Activated T-helper 1 cell treated with anti-CD3 and anti-CD28 coated beads, Interleukin-12 subunit alpha, Interleukin-12 subunit beta, Interleukin-2, Interleukin-4 antibody, amounts not matched to agents 30 ng/mL and 10 ng/mL and 1 ng/mL, durations not matched to agents 14 hours and 24 hours and 36 hours (primary cell): ENCODE measurements at regions of chr17 and their contacts with region 1.

Region 1: DNA sequence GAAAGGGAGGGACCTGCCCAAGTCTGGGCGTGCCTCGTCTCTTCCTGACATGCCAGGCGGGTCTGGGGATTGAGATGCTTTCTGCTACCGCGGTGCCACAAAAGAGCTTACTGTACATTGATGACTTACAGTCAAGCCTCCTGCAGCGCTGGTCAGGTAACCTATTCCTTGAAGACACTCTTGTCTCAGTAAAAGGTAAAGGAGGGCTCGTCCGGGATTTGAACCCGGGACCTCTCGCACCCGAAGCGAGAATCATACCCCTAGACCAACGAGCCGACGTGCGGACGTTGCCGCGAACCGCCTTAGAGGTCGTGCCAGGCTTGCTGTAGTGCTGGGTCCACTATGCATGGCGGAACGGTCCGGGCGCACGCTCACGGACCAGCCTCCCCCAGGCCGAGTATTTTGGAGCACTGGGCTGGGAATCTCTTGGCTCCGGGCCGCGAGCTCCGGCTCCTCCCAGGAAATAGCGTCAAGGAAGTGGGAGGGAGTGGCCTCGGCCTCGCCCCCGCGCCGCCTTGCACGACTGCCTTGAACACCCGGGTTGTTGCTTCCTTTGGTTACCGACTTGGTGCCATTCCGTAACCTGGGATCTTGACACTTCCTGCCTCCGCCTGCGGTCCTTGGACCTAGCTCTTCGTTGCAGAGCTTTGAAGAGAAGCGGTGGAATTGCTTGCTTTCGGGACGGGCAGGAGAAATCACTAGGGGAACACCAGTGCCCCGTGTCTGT is 12.4 kb upstream of the AURKB start:
- DNase-seq: peak; percentile 85
- H3K4me3 Mint-ChIP-seq: peak overlapping the region; percentile 97
- H3K27ac Mint-ChIP-seq: peak overlapping the region; percentile 98
- H3K4me1 Mint-ChIP-seq: peaks cover 70% of the 10 kb centered on the region
- H3K27me3 Mint-ChIP-seq: peaks cover 21% of the 10 kb centered on the region

Region 2: DNA sequence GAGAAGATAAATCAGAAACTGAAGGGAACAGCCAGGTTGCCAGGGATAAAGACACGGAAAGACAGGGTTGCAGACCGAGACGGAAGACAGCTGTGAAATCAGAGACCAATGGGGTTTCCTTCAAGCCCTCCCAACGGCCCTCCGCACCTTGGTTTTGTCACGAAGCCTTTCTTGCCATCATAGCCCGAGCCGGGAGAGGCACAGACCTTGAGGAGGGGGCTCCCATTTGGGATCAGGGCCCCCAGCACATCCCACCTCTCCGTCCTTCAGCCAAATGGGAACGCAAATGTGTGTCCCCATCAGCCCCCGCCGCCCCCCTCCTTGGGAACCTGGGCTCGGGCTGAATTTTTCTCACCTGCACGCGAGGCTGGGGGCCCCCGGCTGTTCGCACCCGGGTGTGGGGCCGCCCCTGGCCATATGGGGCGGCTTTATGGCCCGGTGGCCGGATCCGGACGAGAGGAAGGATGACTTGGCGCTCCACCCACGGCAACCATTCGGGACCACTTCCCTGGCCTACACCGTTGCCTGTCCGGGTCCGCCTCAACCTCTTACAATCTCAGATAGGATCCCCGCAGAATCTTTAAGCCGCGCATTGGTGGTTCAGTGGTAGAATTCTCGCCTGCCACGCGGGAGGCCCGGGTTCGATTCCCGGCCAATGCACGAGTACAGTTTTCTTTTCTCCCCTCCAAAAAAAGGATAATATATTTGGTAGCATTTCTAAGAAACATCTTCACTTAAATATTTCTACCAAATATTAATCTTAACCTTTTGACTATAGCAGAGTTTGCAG is 97.4 kb before region 1 on chr17:
- intact Hi-C with region 1: loop called (anchors 1 kb)
- DNase-seq: peak; percentile 79
- H3K4me3 Mint-ChIP-seq: peak overlapping the region; percentile 91
- H3K27ac Mint-ChIP-seq: peak overlapping the region; percentile 97
- H3K4me1 Mint-ChIP-seq: peaks cover 49% of the 10 kb centered on the region
- H3K27me3 Mint-ChIP-seq: peaks cover 52% of the 10 kb centered on the region

Region 3: DNA sequence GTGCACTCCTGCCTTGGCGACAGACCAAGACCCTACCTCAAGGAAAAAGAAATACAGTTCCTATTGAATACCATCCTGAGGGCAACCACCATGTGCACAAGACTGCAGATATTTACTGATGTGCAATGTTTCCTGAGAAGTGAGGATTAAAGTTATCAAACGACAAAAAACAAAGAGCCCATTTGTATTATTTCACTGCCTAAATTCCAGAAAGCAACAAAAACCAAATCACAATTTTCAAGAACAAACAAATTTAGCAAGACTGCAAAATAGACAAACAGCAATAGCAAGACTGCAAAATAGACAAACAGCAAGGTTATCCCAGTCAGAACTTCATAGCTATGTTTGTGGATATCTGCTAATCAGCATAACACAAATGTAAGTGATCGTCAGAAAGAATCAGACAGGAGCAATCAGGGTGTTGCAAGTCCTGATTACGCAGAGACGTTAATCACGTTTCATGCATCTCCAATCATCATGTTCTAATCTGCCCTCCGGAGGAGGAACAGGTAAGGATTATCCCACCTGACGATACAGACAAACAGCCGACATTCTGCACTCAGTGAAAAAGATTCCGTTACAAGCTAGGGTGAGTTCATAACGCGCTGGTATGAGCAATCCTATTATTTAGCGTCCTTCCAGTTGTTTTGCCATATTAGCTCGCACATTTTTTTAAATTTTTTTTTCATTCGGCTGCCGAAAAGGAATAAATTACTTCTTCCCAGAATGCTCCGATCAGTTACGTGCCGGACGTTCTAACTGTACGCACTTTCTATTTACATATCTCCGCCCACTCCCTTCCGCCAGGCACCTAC is 49.5 kb before region 1 on chr17:
- intact Hi-C with region 1: loop called (anchors 1 kb)
- DNase-seq: peak; percentile 76
- H3K4me3 Mint-ChIP-seq: peak overlapping the region; percentile 87
- H3K27ac Mint-ChIP-seq: peak overlapping the region; percentile 99
- H3K4me1 Mint-ChIP-seq: peaks cover 45% of the 10 kb centered on the region
- H3K27me3 Mint-ChIP-seq: peaks cover 2% of the 10 kb centered on the region

Region 4: GRCh38 chr17:8209909-8210760 is 12.7 kb before region 1 on chr17 and contains the start of gene AURKB:
- intact Hi-C with region 1: loop called (anchors 1 kb)
- DNase-seq: peak; percentile 91
- H3K4me3 Mint-ChIP-seq: peak within 1 kb of the TSS; percentile 96
- H3K27ac Mint-ChIP-seq: peak within 1 kb of the TSS; percentile 94
- H3K4me1 Mint-ChIP-seq: peaks cover 34% of the 10 kb centered on the region
- H3K27me3 Mint-ChIP-seq: no peaks in the 10 kb centered on the region
- total RNA-seq, gene AURKB: 82.2 and 88.7 TPM in 2 replicates

Region 5: DNA sequence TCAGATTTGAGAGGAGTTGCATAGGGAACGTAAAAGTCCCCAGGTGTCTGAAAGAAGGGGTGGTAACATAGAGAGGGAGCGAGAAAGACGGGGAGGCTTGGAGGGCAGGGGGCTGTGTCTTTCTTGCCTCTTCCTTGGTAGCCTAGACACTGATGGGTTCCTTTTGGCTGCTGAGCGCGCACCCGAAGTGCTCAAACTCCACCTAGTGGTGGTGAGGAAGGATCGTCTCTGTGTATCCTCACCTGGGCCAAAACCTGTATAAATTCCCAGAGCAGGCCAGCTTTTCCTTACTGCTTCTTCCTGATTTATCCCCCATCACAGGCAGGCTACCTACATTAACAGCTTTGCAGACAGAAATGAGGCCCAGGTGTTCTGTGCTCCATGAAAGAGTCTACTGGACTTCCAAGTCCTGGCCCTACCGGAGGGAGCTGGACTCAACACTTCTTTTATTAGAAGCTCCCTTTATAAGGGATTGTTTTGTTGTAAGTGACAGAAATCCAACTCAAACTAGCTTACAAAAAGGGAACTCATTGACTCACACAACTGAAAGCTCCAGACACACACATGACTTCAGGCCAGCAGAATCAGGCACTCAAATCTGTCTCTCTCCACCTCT is 77.9 kb after region 1 on chr17:
- intact Hi-C with region 1: loop called (anchors 1 kb)
- DNase-seq: peak; percentile 39
- H3K4me3 Mint-ChIP-seq: no peak overlapping the region
- H3K27ac Mint-ChIP-seq: peak overlapping the region; percentile 21
- H3K4me1 Mint-ChIP-seq: peaks cover 14% of the 10 kb centered on the region
- H3K27me3 Mint-ChIP-seq: no peaks in the 10 kb centered on the region

Region 6: GRCh38 chr17:8447799-8448198 is 225.0 kb after region 1 on chr17:
- intact Hi-C with region 1: no loop called
- DNase-seq: no peak
- H3K4me3 Mint-ChIP-seq: no peak overlapping the region
- H3K27ac Mint-ChIP-seq: no peak overlapping the region
- H3K4me1 Mint-ChIP-seq: peaks cover 14% of the 10 kb centered on the region
- H3K27me3 Mint-ChIP-seq: no peaks in the 10 kb centered on the region